Ovary (tissue), 10 donors: ENCODE measurements at regions of chr5 and their contacts with region 1.

Region 1: GRCh38 chr5:167442922-167443321 is 848.5 kb upstream of the WWC1 start:
- DNase-seq: no peak
- H3K4me3 ChIP-seq: no peak overlapping the region
- H3K27ac ChIP-seq: no peak overlapping the region
- H3K4me1 ChIP-seq: no peaks in the 10 kb centered on the region
- H3K27me3 ChIP-seq: no peaks in the 10 kb centered on the region
- CTCF ChIP-seq: no peak
- EP300 ChIP-seq: no peak
- POLR2A ChIP-seq: no peak

Region 2: DNA sequence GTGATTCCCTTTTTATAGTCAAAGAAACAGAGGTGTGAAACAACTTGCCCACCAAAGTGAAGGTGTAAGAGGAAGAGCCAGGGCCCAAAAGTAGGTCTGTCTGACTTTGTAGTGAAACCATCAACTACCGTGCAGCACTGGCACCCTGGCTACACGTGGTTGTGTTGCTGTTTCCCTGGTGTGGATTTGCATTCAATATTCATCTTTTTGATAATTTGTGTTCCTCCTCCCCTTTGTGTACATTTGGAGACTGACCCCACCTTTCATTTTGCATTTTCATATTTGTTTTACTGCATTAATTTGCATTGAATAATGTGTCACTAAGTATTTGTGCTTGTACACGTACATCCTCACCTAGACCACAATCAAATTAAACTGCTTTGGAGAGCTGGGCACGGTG is 25.3 kb before region 1 on chr5:
- intact Hi-C with region 1: loop called in 1 of 4 experiments (anchors 1 kb)
- DNase-seq: no peak
- H3K4me3 ChIP-seq: no peak overlapping the region
- H3K27ac ChIP-seq: no peak overlapping the region
- H3K4me1 ChIP-seq: no peaks in the 10 kb centered on the region
- H3K27me3 ChIP-seq: no peaks in the 10 kb centered on the region
- CTCF ChIP-seq: no peak
- EP300 ChIP-seq: no peak
- POLR2A ChIP-seq: no peak

Region 3: GRCh38 chr5:167524936-167525485 is 82.1 kb after region 1 on chr5:
- intact Hi-C with region 1: no loop called
- DNase-seq: no peak
- H3K4me3 ChIP-seq: no peak overlapping the region
- H3K27ac ChIP-seq: no peak overlapping the region
- H3K4me1 ChIP-seq: no peaks in the 10 kb centered on the region
- H3K27me3 ChIP-seq: no peaks in the 10 kb centered on the region
- CTCF ChIP-seq: no peak
- EP300 ChIP-seq: no peak
- POLR2A ChIP-seq: no peak